ENCODE measurements at regions of chr6 and their contacts with region 1.

Region 1: GRCh38 chr6:6696867-6697531 is 108.5 kb downstream of the LY86 start:
- DNase-seq: peak; percentile 83 to 91 (median 87)
- H3K4me3 ChIP-seq: no peak overlapping the region
- H3K27ac ChIP-seq: no peak overlapping the region
- H3K4me1 ChIP-seq: peaks cover 4 to 72% (median 38%) of the 10 kb centered on the region in 4 experiments
- H3K27me3 ChIP-seq: no peaks in the 10 kb centered on the region

Region 2: GRCh38 chr6:6368684-6369052 is 328.3 kb before region 1 on chr6:
- CTCF ChIA-PET with region 1: no interaction called
- POLR2A ChIA-PET with region 1: no interaction called
- DNase-seq: no peak
- H3K4me3 ChIP-seq: no peak overlapping the region
- H3K27ac ChIP-seq: no peak overlapping the region
- H3K4me1 ChIP-seq: no peaks in the 10 kb centered on the region
- H3K27me3 ChIP-seq: no peaks in the 10 kb centered on the region

Region 3: DNA sequence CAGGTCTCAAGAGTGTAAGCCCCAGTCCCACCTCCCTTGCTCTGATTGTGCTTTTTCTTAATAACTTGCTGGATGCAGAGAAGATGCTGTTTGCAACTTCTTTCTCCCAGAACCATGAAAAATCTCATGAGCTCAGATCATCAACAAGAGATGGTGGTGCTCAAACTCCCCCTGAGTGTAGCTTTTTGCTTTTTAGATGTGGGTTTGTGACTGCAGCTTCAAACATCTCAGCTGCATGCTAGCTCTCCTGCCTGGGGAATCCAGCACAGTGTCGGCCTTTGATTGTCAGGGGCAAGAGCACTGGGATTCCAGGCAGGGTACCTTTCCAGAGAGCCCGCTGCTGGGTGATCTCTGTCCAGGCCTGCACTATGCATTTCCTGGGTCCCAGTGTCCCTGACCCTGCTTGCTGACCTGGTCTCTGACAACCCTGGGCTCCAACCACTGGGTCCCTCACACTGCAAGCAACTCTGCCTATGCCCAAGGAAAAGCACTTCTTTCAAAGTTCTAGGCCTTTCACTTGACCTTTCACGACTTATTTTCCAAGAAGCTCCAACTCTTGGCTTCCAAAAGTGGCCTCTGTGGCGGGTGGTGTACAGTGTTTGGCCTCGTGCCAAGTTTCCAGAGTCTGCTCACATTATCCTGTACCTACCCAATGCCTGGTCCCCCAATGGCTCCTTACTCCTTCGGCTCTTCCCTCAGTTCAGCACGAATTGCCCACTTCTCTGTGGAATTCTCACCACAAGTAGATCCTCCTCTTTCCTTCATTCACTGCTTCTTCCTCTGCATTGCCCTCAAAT is 178.2 kb before region 1 on chr6:
- CTCF ChIA-PET with region 1: no interaction called
- POLR2A ChIA-PET with region 1: no interaction called
- DNase-seq: no peak
- H3K4me3 ChIP-seq: no peak overlapping the region
- H3K27ac ChIP-seq: no peak overlapping the region
- H3K4me1 ChIP-seq: no peaks in the 10 kb centered on the region
- H3K27me3 ChIP-seq: peaks cover 3 to 56% (median 18%) of the 10 kb centered on the region in 5 experiments

Region 4: DNA sequence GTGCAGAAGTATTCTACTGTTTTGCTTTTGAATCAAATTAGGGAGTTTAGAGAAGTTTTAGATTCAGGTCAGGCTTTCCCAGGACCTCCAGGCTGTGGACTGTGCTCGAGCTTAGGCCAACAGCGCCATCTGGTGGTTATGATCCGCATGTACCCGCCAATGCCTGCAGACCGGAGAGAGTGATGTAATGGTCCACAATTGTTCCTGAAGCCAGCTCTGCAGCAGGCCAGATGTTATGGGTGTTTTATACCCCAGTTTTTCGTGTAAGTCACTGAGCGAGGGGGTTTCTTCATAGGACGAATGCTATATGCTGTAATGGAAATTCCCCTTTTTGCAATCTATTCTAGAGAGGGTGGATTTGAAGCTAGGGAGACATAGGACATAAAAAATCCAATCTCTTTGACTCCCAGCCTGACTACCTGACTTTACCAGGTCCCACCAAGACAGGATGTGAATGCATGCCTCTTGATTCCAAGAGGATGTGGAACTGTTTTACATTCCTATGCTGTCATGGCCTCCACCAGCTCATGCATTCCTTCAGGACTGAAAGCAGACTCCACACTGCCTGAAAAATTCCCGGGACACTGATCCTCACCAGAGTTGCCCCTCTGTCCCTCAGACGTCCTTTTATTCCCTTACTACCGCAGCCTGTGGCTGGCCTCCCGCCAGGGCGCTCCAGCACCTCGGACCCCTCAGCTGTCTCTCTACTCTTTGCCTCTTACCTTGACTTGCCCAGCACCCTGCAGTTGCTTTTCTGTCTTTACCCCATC is 149.7 kb before region 1 on chr6:
- CTCF ChIA-PET with region 1: no interaction called
- POLR2A ChIA-PET with region 1: no interaction called
- DNase-seq: peak; percentile 88 to 93 (median 91)
- H3K4me3 ChIP-seq: peak overlapping the region in 6 of 7 experiments; percentile 23 to 76 (median 44)
- H3K27ac ChIP-seq: no peak overlapping the region
- H3K4me1 ChIP-seq: peaks cover 0 to 19% (median 15%) of the 10 kb centered on the region in 4 experiments
- H3K27me3 ChIP-seq: peaks cover 0 to 30% (median 8%) of the 10 kb centered on the region in 5 experiments

Region 5: DNA sequence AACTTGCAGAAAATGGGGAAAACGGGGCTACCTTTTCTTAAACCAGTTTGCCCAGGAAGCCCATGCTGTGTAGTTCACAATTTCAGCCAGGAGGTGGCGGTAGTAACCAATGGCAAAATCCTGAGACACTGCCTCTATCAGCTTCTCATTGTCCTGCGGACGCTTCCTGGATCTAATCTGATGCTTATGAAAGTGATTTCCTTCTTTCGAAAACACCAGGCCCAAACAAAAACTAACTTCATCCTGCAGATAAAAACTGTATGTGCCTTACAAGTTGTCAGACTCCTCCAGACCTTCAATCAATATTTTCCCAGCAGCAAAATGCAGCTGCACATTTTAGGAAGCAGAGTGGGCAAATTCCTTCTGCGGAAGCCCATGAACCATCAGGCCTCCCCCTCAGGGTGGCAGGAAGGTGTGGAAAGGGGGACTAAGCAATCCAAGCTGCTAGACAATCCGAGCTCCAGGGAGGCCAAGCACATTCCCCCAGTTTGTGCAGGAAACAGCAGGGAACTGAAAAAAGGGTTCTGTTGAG is 20.0 kb before region 1 on chr6:
- CTCF ChIA-PET with region 1: interaction called, 20 read pairs
- POLR2A ChIA-PET with region 1: no interaction called
- DNase-seq: peak; percentile 82 to 88 (median 85)
- H3K4me3 ChIP-seq: peak overlapping the region in 1 of 7 experiments; percentile 56
- H3K27ac ChIP-seq: no peak overlapping the region
- H3K4me1 ChIP-seq: peaks cover 4 to 55% (median 30%) of the 10 kb centered on the region in 4 experiments
- H3K27me3 ChIP-seq: no peaks in the 10 kb centered on the region

Region 6: GRCh38 chr6:6707143-6707542 is 10.1 kb after region 1 on chr6:
- CTCF ChIA-PET with region 1: interaction called, 11 read pairs
- POLR2A ChIA-PET with region 1: no interaction called
- DNase-seq: no peak
- H3K4me3 ChIP-seq: no peak overlapping the region
- H3K27ac ChIP-seq: no peak overlapping the region
- H3K4me1 ChIP-seq: peaks cover 6 to 61% (median 13%) of the 10 kb centered on the region in 4 experiments
- H3K27me3 ChIP-seq: no peaks in the 10 kb centered on the region

Region 7: DNA sequence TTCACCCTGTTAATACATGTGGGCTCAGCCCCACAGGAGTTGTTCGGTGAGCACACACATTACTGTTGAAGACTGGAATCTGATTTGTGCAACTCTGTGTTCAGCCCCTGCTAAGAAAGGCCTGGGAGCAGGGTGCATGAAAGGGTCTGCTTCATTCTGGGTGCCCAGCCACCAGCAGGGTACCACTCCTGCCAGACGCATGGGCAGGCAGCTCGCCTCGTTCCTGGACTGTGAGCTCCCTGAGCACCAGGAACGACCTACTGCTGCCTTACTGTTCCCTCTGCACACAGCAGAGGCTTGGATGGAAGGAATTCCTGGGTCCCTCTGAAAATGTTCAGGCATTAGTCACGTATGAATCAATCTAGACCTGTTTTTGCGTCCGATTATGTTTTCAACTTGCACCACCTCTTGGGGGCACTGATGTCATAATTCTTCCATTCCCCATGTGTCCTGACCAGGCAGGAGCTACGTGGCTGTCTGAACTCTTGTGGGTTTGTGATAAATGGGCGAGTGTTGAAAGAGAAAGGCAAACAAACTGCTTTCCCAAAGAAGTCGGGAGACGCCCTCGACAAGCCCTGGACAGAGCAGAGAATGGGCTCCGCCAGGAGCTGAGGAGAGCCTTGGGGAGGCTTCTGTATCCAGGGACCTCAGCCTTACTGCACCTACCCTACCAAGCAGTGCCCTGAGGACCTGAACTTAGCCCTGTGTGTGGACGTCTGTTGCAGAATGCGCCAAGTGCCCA is 15.4 kb after region 1 on chr6:
- CTCF ChIA-PET with region 1: interaction called, 13 read pairs
- POLR2A ChIA-PET with region 1: no interaction called
- DNase-seq: peak; percentile 78 to 91 (median 89)
- H3K4me3 ChIP-seq: peak overlapping the region in 5 of 7 experiments; percentile 4 to 60 (median 41)
- H3K27ac ChIP-seq: peak overlapping the region; percentile 67 to 84
- H3K4me1 ChIP-seq: peaks cover 27 to 69% (median 48%) of the 10 kb centered on the region in 4 experiments
- H3K27me3 ChIP-seq: no peaks in the 10 kb centered on the region

Region 8: GRCh38 chr6:6724539-6725467 is 27.8 kb after region 1 on chr6:
- CTCF ChIA-PET with region 1: interaction called, 69 read pairs
- POLR2A ChIA-PET with region 1: interaction called, 3 read pairs
- DNase-seq: peak; percentile 81 to 90 (median 89)
- H3K4me3 ChIP-seq: peak overlapping the region in 6 of 7 experiments; percentile 20 to 62 (median 40)
- H3K27ac ChIP-seq: peak overlapping the region; percentile 13 to 59
- H3K4me1 ChIP-seq: peaks cover 16 to 79% (median 52%) of the 10 kb centered on the region in 4 experiments
- H3K27me3 ChIP-seq: no peaks in the 10 kb centered on the region

Region 9: DNA sequence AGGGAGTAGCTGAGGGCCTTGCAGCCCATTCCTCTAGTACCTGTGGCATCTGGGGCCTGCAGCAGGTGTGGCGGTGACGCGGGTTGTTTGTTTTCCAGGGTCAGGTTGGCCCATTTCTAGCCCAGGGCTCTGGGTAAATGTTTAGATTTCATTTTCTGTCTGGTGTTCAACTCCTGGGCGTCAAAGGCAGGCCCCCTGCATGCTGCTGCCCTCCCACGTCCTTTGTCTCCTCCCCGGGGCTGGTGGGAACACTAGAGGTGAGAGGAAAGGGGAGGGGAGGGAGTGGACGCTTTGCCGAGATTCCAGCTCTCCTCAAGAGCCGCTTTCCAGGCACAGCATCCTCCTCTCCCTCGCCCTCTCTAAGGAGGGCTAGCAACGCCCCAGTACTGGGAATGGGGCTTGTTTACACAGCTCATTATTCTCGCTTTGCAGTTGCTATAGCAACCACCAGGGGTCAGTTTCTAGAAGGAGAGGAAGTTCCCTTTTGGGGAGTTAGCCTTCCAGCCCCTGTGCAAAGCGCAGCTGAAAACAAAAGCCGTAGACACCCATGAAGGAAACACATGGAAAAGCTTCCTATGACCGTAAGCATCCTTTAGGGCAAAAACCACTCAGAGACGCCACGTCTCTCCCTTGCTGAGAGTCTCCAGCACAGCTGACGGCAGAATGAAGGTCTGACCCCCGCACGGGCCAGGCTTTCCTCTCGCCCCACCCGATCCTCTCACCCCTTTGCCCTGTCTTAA is 62.1 kb after region 1 on chr6:
- CTCF ChIA-PET with region 1: interaction called, 10 read pairs
- POLR2A ChIA-PET with region 1: no interaction called
- DNase-seq: peak; percentile 74 to 84 (median 83)
- H3K4me3 ChIP-seq: peak overlapping the region in 4 of 7 experiments; percentile 13 to 56 (median 46)
- H3K27ac ChIP-seq: peak overlapping the region in 1 of 2 experiments; percentile 3
- H3K4me1 ChIP-seq: peaks cover 0 to 34% (median 27%) of the 10 kb centered on the region in 4 experiments
- H3K27me3 ChIP-seq: no peaks in the 10 kb centered on the region

Region 10: GRCh38 chr6:6927521-6928371 is 230.7 kb after region 1 on chr6:
- CTCF ChIA-PET with region 1: no interaction called
- POLR2A ChIA-PET with region 1: no interaction called
- DNase-seq: peak in 1 of 3 donors; percentile 52
- H3K4me3 ChIP-seq: no peak overlapping the region
- H3K27ac ChIP-seq: no peak overlapping the region
- H3K4me1 ChIP-seq: peaks cover 0 to 30% (median 7%) of the 10 kb centered on the region in 4 experiments
- H3K27me3 ChIP-seq: no peaks in the 10 kb centered on the region